Mammary epithelial cell (primary cell): ENCODE measurements at regions of chr6 and their contacts with region 1.

Region 1: DNA sequence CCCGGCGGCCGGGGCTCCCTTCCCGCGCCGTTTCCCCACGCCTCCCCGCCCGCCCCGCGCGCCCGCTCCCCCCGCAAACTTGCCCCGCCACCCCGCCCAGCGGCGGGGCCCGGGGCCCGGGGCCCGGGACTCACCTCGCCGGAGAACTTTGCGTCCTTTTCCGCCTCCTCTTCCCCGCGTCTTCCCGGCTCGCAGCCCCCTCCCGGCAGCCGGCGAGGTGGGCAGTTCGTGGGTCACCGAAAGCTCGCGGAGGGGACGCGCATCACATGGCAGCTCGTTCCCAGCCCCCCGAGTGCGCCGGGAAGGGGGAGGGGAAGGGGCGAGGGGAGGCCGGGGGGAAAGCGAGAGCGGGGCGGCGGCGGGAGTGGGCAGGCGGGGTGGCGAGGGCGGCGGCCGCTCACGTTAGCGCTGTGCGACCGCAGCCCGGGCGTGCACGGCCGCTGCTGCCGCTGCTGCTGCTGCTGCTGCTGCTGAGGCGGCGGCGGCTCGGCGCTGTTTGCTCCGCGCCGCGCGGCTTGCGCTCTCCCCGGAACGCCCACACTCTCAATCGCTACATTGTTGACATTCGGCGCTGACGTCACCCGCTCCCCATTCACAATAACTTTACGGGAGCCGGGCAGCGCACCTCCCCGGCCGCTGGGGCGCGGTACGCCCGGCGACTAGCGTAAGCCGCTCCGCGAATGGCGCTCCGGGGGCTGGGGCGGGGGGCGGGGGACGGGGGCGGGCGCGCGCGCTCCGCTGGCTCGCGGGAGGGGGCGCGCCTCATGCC is at the start of gene BACH2:
- DNase-seq: peak; percentile 90
- H3K4me3 ChIP-seq: peak within 1 kb of the TSS; percentile 67 to 85 (median 73)
- H3K27ac ChIP-seq: no peak within 1 kb of the TSS
- H3K4me1 ChIP-seq: peaks cover 18% of the 10 kb centered on the region
- H3K27me3 ChIP-seq: peaks cover 2% of the 10 kb centered on the region
- CTCF ChIP-seq: peak in 1 of 2 donors; percentile 35
- total RNA-seq, gene BACH2: 3.6 to 4.5 TPM

Region 2: DNA sequence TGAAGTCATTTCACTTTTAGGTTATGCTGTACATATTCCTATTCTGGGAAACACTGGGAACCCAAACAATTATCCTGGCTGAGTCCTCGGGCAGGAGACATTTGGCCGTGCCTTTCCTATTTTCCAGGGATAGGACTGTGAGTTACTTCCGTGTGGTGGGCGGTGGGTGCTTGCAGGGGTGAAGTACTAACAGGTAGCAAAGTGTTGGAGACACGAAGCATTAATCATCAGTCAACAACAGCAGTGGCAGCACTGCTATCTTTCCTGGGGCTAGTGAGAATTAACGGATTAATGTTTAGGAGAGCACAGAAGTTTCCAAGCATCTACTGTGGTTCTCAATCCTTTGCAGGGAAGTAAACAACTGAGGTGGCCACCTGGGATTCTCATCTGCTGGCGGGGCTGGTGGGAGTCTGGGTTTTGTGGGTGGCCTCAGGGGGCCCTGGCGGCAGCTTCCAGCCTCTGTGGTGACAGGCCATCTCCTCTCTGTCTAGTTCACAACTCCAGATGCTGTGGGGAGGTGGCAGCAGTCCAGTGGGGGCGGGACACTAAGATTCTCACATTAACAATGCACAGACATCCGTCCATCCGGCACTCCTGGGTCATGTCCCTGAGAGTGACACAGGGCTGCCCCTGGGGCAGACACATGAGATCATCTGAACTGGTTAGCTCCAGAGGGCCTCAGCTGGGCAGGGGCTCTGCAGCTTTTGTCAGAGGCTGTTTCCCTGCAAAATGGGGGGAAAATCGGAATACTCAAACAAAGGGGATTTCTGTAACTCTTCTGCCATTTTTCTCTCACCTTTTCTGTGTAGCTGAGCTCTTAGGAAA is 311.4 kb before region 1 on chr6:
- CTCF ChIA-PET with region 1: no interaction called
- dilution Hi-C with region 1: no loop called
- in situ Hi-C with region 1: loop called in 1 of 2 experiments (anchors 25 kb)
- intact Hi-C with region 1: no loop called
- DNase-seq: no peak
- H3K4me3 ChIP-seq: no peak overlapping the region
- H3K27ac ChIP-seq: no peak overlapping the region
- H3K4me1 ChIP-seq: peaks cover 11% of the 10 kb centered on the region
- H3K27me3 ChIP-seq: no peaks in the 10 kb centered on the region
- CTCF ChIP-seq: no peak

Region 3: DNA sequence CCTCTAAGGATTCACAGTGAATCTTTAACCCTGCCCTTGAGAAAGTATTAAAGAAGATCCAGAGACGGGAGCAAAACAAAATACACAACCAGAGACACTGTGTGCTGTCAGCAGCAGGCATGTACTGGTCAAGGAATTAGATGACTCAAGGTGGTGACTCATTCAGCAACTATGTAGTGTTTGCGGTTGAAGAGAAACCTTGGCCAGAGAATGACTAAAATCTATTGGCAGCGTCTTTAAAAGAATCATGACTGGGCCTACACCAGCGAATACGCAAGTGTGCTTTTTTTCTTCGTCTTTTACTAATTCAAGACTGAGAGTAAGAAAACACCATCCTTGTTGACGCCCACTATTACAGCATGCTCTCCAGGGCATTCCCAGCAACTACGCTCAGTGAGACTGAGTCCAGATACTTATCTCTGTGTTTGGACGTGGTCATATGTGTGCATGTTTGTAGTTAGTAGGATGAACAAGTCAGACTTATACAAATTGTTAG is 72.5 kb after region 1 on chr6:
- CTCF ChIA-PET with region 1: no interaction called
- dilution Hi-C with region 1: no loop called
- in situ Hi-C with region 1: no loop called
- intact Hi-C with region 1: loop called (anchors 2 kb)
- DNase-seq: peak; percentile 100
- H3K4me3 ChIP-seq: no peak overlapping the region
- H3K27ac ChIP-seq: peak overlapping the region; percentile 84
- H3K4me1 ChIP-seq: peaks cover 21% of the 10 kb centered on the region
- H3K27me3 ChIP-seq: no peaks in the 10 kb centered on the region
- CTCF ChIP-seq: no peak

Region 4: DNA sequence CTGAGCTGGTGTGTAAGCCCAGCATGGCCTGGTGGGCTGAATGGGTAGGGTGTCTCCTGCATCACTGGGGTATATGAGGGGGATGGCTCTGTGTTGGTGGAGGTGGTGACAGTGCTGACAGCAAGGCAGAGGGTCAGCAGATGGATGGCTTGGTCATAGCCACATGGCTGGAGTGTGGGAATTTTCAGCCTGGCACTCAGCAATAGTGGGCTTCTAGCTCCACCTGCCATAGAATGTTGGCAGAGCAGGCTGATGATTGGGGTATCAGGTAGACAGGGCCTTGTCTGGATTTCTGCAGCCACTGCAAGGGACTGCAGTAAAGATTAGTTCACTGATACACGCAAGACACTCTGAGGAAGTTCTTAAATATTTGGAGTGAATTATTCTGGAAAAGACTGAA is 137.6 kb after region 1 on chr6:
- CTCF ChIA-PET with region 1: no interaction called
- dilution Hi-C with region 1: no loop called
- in situ Hi-C with region 1: no loop called
- intact Hi-C with region 1: loop called (anchors 2 kb)
- DNase-seq: no peak
- H3K4me3 ChIP-seq: no peak overlapping the region
- H3K27ac ChIP-seq: no peak overlapping the region
- H3K4me1 ChIP-seq: peaks cover 5% of the 10 kb centered on the region
- H3K27me3 ChIP-seq: no peaks in the 10 kb centered on the region
- CTCF ChIP-seq: peak; percentile 19 to 23